Endothelial cell of umbilical vein (primary cell): ENCODE measurements at regions of chr1 and their contacts with region 1.

Region 1: DNA sequence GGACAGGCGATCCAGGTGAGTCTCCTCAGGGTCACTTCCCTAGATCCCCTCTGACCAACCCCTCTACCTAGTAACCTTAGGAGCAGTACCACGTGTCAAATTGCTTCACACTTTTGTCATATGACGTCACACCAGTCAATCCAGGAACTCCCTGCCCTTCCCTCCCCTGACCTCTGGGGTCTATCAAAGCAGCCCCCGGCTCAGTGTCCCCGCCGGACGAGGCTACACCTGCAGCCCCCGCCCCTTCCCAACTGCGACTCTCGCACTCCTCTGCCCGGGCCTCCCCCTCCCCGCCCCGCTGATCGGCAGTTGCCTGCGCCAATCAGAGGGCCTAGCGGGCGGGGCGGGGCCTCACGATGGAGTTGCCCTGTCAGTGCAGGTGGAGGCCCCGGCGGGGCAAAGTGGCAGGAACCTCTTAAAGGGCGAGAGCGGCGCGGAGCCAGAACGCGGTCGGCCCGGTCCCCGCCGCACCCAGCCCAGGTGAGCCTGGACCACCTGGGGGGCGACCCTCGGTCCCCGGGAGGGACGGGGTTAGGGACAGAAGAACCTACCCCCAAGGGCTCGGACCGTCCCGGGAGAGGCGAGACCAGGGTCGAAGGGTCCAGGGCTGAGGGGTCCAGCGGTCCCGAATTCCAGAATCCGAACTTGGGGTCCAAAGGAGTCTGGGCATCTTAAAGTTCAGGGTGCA is 27.5 kb upstream of the EPB41 start:
- DNase-seq: peak; percentile 80
- H3K4me3 ChIP-seq: peak overlapping the region; percentile 68 to 92 (median 84)
- H3K27ac ChIP-seq: peak overlapping the region; percentile 57
- H3K4me1 ChIP-seq: peaks cover 28% of the 10 kb centered on the region
- H3K27me3 ChIP-seq: no peaks in the 10 kb centered on the region
- CTCF ChIP-seq: no peak
- POLR2A ChIP-seq: no peak

Region 2: GRCh38 chr1:28682840-28683239 is 204.0 kb before region 1 on chr1:
- CTCF ChIA-PET with region 1: no interaction called
- POLR2A ChIA-PET with region 1: no interaction called
- dilution Hi-C with region 1: no loop called
- intact Hi-C with region 1: no loop called
- DNase-seq: no peak
- H3K4me3 ChIP-seq: no peak overlapping the region
- H3K27ac ChIP-seq: no peak overlapping the region
- H3K4me1 ChIP-seq: no peaks in the 10 kb centered on the region
- H3K27me3 ChIP-seq: no peaks in the 10 kb centered on the region
- CTCF ChIP-seq: no peak
- POLR2A ChIP-seq: no peak

Region 3: GRCh38 chr1:28926629-28927265 is 39.9 kb after region 1 on chr1:
- CTCF ChIA-PET with region 1: interaction called, 8 read pairs
- POLR2A ChIA-PET with region 1: no interaction called
- dilution Hi-C with region 1: no loop called
- intact Hi-C with region 1: loop called (anchors 1 kb)
- DNase-seq: peak; percentile 93
- H3K4me3 ChIP-seq: peak overlapping the region in 1 of 3 experiments; percentile 52
- H3K27ac ChIP-seq: peak overlapping the region; percentile 68
- H3K4me1 ChIP-seq: peaks cover 28% of the 10 kb centered on the region
- H3K27me3 ChIP-seq: no peaks in the 10 kb centered on the region
- CTCF ChIP-seq: no peak
- POLR2A ChIP-seq: peak; percentile 28

Region 4: DNA sequence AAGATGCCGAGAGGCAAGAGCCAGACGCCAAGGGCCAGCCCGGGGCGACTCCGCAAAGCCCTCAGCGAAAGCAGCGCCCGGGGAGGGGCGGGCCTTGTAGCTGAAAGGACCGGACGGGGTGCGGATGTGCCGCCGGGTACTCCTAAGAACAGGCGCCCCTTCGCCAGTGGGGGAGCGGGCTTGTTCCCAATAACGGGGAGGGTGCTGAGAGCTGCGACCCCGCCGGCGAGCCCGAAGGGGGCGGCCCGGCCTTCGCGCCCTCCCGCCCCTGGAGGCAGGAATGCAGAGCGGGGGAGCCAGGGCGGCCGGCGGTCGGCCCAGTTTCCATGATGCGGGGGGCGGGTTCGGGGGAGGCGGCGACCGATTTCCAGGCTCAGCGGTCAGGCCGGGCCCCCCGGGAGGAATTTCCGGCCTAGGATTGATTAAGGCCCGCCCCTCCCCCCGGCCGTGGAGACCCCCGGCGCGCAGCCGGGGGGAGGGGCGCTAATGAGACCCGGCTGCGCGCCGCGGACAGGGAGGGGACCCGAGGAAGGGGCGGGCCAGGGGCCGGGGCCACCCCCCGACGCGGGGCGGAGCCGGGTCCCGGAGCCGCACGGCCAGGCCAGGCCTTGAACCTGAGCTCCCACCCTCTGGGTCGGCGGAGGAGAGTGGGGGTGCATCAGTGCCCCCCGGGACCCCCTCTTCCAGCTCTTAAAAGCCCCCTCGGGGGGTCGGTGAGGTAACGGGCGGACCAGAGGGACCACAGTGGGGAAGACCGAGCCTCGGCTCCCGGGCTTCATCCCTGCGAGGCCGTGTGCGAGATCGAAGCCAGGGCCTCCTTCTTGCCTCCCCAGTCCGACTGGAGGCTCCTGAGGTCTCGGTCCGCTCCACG is 237.7 kb after region 1 on chr1:
- CTCF ChIA-PET with region 1: interaction called, 17 read pairs
- POLR2A ChIA-PET with region 1: no interaction called
- dilution Hi-C with region 1: no loop called
- intact Hi-C with region 1: loop called (anchors 1 kb)
- DNase-seq: peak; percentile 72
- H3K4me3 ChIP-seq: peak overlapping the region; percentile 33 to 52 (median 42)
- H3K27ac ChIP-seq: peak overlapping the region; percentile 46
- H3K4me1 ChIP-seq: peaks cover 23% of the 10 kb centered on the region
- H3K27me3 ChIP-seq: peaks cover 0 to 14% of the 10 kb centered on the region in 2 experiments
- CTCF ChIP-seq: peak; percentile 55 to 72
- POLR2A ChIP-seq: peak; percentile 26

Region 5: GRCh38 chr1:29197585-29197924 is 310.7 kb after region 1 on chr1:
- CTCF ChIA-PET with region 1: interaction called, 133 read pairs
- POLR2A ChIA-PET with region 1: interaction called, 4 read pairs
- dilution Hi-C with region 1: no loop called
- intact Hi-C with region 1: loop called (anchors 1 kb)
- DNase-seq: peak; percentile 39
- H3K4me3 ChIP-seq: no peak overlapping the region
- H3K27ac ChIP-seq: no peak overlapping the region
- H3K4me1 ChIP-seq: peaks cover 8% of the 10 kb centered on the region
- H3K27me3 ChIP-seq: no peaks in the 10 kb centered on the region
- CTCF ChIP-seq: peak; percentile 24 to 51
- POLR2A ChIP-seq: no peak

Region 6: GRCh38 chr1:30707412-30708360 is 1820.8 kb after region 1 on chr1:
- CTCF ChIA-PET with region 1: interaction called, 5 read pairs
- POLR2A ChIA-PET with region 1: no interaction called
- dilution Hi-C with region 1: no loop called
- intact Hi-C with region 1: loop called (anchors 1 kb)
- DNase-seq: peak; percentile 50
- H3K4me3 ChIP-seq: no peak overlapping the region
- H3K27ac ChIP-seq: no peak overlapping the region
- H3K4me1 ChIP-seq: no peaks in the 10 kb centered on the region
- H3K27me3 ChIP-seq: peaks cover 0 to 3% of the 10 kb centered on the region in 2 experiments
- CTCF ChIP-seq: peak; percentile 84 to 88
- POLR2A ChIP-seq: no peak